GM13977 (cell line): ENCODE measurements at regions of chr10 and their contacts with region 1.

Region 1: DNA sequence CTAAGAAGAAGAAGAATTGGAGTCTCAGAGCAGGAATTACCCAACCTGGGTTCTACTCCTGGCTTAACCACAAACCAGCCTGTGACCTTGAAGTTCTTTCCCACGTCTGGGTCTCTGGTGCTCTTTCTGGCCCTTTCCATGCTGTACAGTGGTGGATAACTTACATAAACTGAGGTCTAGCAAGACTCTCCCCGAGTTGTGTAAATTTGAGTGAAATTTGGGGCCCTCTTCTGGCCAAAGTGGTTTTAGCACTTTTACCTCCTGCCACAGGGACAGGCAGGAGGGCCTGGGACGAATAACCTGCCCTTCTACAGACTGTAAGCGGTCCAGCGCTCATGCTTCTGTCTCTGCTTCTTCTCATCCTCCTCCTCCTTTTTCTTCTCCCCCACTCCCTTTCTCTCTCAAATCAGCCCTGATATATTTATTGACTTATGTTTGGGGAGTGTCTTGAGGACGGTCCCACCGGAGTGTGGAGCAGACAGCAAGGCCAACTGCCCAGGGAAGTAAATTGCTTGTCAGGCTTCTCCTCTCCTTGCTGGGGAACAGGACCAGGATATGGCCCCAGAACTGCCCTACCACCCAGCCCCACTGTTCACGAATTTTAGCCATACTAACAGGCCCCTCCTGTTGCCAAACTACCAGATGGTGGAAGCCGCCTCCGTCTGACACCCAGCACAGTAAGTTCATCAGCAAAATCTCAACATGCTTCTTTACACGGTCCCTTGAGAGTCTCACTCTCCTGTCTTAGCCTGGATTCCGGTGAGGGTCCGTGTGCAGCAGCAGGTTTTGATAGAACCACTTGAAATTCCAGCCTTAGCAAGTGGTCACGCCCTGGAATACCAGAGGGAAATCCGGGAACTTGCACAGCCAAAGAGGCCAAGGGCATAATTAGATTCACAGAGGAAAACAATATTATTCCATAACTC is 4.0 kb upstream of the SH3PXD2A start:
- DNase-seq: peak; percentile 74
- CTCF ChIP-seq: peak; percentile 67

Region 2: DNA sequence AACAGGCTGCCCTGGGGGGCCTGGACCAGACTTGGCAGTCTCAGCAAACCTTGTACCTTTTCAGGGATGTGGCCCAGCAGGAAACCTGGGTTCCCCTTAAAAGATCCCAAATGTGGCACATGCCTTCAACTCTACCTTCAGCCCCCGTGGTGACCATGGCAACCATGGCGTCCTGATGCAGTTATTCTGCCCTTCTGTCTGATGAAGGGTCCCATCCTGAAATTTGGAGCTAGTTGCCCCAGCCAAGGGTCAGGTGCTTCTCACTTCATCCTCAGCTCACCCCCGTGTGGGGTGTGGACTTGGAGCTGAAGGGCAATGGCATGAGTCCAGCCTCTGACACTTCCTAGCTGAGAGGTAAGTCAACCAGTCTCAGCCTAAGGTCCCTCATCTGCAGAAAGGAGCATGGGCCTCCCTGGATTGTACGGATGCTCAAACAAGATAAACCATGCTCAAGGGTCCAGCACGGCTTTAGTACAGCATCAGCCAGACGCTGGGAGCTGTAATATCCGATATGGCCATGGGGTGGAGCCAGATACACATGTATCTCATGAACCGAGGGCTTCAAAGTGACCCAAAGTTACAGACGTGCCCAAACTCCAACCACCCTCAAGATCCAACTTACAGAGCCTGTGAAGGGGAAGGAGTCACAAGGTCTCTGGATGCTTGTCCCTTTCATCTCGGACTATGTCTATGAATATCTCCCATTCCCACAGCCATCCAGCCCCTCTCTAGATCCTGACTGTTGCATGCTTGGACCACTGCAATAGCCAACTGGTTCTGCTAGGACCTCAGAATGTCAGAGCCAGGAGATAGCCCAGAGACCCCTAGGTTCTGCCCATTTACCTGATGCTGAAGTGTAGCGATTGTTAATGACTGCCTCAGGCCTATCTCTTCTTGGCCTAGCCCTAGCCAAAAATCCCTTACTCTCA is 146.6 kb before region 1 on chr10:
- in situ Hi-C with region 1: loop called (anchors 10 kb)
- DNase-seq: peak; percentile 83
- CTCF ChIP-seq: peak; percentile 93